Naive thymus-derived CD4-positive, alpha-beta T cell (primary cell): ENCODE measurements at regions of chr17 and their contacts with region 1.

Region 1: GRCh38 chr17:28644985-28645939 is at the start of gene BLTP2:
- DNase-seq: peak; percentile 86 to 95 (median 93)
- ATAC-seq: peak; percentile 99
- H3K4me3 ChIP-seq: peak within 1 kb of the TSS; percentile 87
- H3K4me3 Mint-ChIP-seq: peak within 1 kb of the TSS; percentile 89 to 99 (median 94)
- H3K27ac ChIP-seq: peak within 1 kb of the TSS; percentile 95
- H3K27ac Mint-ChIP-seq: peak within 1 kb of the TSS; percentile 90 to 99 (median 97)
- H3K4me1 ChIP-seq: peaks cover 26 to 29% of the 10 kb centered on the region in 2 donors
- H3K4me1 Mint-ChIP-seq: peaks cover 29 to 57% (median 39%) of the 10 kb centered on the region in 7 donors
- H3K27me3 ChIP-seq: no peaks in the 10 kb centered on the region
- H3K27me3 Mint-ChIP-seq: no peaks in the 10 kb centered on the region
- total RNA-seq, gene BLTP2: 143 to 163 (median 153) TPM

Region 2: DNA sequence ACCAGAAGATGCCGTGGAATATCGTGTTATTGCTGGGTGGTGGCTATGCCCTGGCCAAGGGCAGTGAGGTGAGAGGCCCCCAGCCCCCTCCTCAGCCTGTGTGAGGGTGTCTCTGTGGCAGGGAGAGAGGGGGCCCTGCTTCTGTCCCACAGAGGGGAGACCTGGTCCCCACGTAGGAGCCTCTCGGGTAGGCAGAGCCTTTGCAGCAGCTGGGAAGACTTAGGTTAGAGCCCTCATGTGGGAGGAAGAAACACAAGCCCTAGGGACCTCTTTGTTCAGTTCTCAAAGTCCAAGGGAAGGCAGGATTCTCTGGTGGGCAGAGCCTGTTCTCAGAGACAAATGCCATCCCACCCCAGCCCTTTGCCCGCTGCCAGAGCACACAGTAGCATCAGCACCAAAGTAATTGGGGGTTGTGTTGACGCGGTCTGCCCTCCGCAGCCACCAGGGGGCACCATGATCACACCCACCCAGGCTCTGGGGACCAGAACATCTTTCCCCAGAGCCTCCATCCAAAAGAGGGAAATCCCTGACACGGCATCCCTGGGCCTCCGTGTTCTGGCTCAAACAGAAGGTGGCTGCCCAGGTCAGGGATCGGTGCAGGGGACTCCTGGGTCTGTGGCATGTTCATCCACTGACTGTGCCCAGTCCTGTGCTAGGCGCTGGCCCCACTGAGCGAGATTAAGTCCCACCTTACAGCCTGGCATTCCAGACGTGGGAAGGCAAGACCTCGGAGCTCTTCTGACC is 150.6 kb before region 1 on chr17:
- CTCF ChIA-PET with region 1: no interaction called
- POLR2A ChIA-PET with region 1: no interaction called
- intact Hi-C with region 1: loop called in 1 of 2 experiments (anchors 1 kb)
- DNase-seq: peak; percentile 56 to 85 (median 73)
- ATAC-seq: peak; percentile 90
- H3K4me3 ChIP-seq: no peak overlapping the region
- H3K4me3 Mint-ChIP-seq: no peak overlapping the region
- H3K27ac ChIP-seq: no peak overlapping the region
- H3K27ac Mint-ChIP-seq: no peak overlapping the region
- H3K4me1 ChIP-seq: no peaks in the 10 kb centered on the region
- H3K4me1 Mint-ChIP-seq: peaks cover 0 to 2% (median 0%) of the 10 kb centered on the region in 7 donors
- H3K27me3 ChIP-seq: no peaks in the 10 kb centered on the region
- H3K27me3 Mint-ChIP-seq: no peaks in the 10 kb centered on the region

Region 3: DNA sequence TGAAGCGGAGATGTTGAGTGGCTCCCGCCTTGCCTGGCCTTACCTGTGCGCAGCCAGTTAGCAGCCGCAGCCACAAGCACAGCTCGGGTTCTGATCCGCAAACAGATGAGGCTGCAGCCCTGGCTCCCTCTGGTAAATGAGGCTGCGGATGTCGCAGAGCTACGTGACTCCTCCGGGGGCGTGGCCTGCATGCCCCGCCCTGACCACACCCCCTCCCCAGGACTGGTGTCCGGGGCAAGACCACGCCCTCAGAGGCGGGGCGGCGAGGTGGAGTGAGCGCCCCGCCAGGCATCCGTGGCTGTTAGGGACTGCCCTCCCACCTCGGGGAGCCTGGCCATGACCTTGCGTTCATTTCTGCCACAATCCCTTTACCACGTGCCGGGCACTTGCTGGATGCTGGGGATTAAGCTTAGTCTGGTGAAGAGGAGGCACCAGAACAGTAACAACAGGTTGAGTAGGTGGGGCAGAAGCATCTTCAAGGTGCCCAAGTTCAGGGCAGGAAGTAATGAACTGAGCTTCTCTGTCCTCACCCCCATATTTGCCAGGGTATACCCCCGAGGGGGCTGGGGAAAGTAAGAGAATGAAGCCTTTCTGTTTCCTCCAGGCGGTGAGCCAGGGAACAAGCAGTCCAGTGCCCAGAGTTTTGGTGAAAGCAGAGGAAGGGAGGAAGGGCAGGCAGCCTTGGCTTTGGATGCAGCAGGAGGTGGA is 68.3 kb before region 1 on chr17 and contains the start of gene ALDOC:
- CTCF ChIA-PET with region 1: no interaction called
- POLR2A ChIA-PET with region 1: interaction called, 14 read pairs
- intact Hi-C with region 1: loop called (anchors 1 to 5 kb)
- DNase-seq: peak; percentile 95 to 99 (median 98)
- ATAC-seq: peak; percentile 100
- H3K4me3 ChIP-seq: peak within 1 kb of the TSS; percentile 50
- H3K4me3 Mint-ChIP-seq: peak within 1 kb of the TSS; percentile 83 to 96 (median 86)
- H3K27ac ChIP-seq: peak within 1 kb of the TSS; percentile 52
- H3K27ac Mint-ChIP-seq: peak within 1 kb of the TSS; percentile 79 to 95 (median 89)
- H3K4me1 ChIP-seq: peaks cover 19 to 23% of the 10 kb centered on the region in 2 donors
- H3K4me1 Mint-ChIP-seq: peaks cover 20 to 70% (median 38%) of the 10 kb centered on the region in 7 donors
- H3K27me3 ChIP-seq: no peaks in the 10 kb centered on the region
- H3K27me3 Mint-ChIP-seq: no peaks in the 10 kb centered on the region
- total RNA-seq, gene ALDOC: 24.5 to 159 (median 40.1) TPM

Region 4: DNA sequence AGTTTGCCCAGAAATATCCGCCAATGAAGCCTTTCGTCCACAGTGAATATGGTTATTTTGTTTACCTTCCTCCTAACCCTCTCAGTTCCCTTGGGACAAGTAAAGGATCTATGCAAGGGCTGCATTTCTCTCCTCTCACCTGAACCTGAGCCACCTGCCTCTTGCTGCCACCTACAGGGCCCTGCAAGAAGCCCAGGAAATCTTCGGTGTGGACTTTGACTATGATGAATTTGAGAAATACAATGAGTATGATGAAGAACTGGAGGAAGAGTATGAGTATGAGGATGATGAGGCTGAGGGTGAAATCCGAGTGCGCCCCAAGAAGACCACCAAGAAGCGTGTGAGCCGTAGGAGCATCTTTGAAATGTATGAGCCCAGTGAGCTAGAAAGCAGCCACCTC is 30.7 kb after region 1 on chr17:
- CTCF ChIA-PET with region 1: interaction called, 4 read pairs
- POLR2A ChIA-PET with region 1: interaction called, 6 read pairs
- intact Hi-C with region 1: loop called (anchors 1 kb)
- DNase-seq: no peak
- ATAC-seq: peak; percentile 44
- H3K4me3 ChIP-seq: no peak overlapping the region
- H3K4me3 Mint-ChIP-seq: no peak overlapping the region
- H3K27ac ChIP-seq: no peak overlapping the region
- H3K27ac Mint-ChIP-seq: peak overlapping the region in 2 of 9 donors; percentile 31 to 39
- H3K4me1 ChIP-seq: no peaks in the 10 kb centered on the region
- H3K4me1 Mint-ChIP-seq: peaks cover 0 to 5% (median 0%) of the 10 kb centered on the region in 7 donors
- H3K27me3 ChIP-seq: no peaks in the 10 kb centered on the region
- H3K27me3 Mint-ChIP-seq: no peaks in the 10 kb centered on the region

Region 5: GRCh38 chr17:28734813-28735722 is 89.8 kb after region 1 on chr17:
- CTCF ChIA-PET with region 1: no interaction called
- POLR2A ChIA-PET with region 1: no interaction called
- intact Hi-C with region 1: no loop called
- DNase-seq: no peak
- ATAC-seq: no peak
- H3K4me3 ChIP-seq: no peak overlapping the region
- H3K4me3 Mint-ChIP-seq: no peak overlapping the region
- H3K27ac ChIP-seq: no peak overlapping the region
- H3K27ac Mint-ChIP-seq: no peak overlapping the region
- H3K4me1 ChIP-seq: peaks cover 0 to 5% of the 10 kb centered on the region in 2 donors
- H3K4me1 Mint-ChIP-seq: peaks cover 5 to 19% (median 14%) of the 10 kb centered on the region in 7 donors
- H3K27me3 ChIP-seq: no peaks in the 10 kb centered on the region
- H3K27me3 Mint-ChIP-seq: no peaks in the 10 kb centered on the region

Region 6: DNA sequence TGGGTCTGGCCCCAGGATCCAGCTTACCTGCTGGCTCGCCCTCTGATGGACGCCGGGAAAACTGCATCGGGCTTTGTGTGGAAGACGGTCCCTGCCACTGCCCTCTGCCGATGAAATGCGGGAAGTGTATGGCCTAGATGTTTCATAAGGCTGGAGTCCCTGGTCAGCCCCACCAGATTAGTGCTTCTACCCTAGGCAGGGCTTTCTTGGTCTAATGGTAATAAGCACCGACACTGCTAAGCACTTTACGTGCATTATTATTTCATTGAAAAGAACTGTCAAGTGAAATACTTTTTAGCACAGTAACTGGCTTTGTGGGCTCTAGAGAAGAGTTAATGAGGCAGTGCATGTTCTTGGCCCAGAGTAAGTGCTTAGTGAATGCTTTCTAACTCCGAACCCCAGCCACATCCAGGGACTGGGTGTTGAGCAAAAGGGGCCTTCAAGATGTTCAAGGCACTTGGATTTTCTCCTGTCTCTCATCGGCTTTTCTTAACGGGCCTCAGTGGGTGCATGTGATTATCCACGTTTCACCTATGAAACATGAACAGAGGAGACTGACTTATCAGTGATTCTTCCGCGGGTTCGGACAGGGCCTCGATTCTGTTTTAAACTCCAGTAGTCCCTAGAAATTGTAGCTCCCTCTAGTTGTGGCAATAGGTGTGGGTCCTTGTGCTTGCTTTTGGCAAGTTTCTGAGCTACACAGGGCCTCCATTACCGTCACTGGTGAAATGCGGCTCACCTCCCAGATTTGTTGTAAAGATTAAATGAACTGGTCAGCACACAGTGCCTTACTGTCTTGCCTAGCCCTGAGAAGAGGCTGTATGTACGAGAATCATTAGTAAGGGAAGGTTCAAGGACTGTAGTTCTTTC is 105.2 kb after region 1 on chr17:
- CTCF ChIA-PET with region 1: no interaction called
- POLR2A ChIA-PET with region 1: no interaction called
- intact Hi-C with region 1: loop called in 1 of 2 experiments (anchors 1 kb)
- DNase-seq: peak; percentile 73 to 87 (median 82)
- ATAC-seq: peak; percentile 96
- H3K4me3 ChIP-seq: no peak overlapping the region
- H3K4me3 Mint-ChIP-seq: peak overlapping the region in 1 of 10 donors; percentile 51
- H3K27ac ChIP-seq: peak overlapping the region; percentile 2
- H3K27ac Mint-ChIP-seq: peak overlapping the region in 4 of 9 donors; percentile 11 to 52 (median 38)
- H3K4me1 ChIP-seq: peaks cover 6 to 14% of the 10 kb centered on the region in 2 donors
- H3K4me1 Mint-ChIP-seq: peaks cover 0 to 29% (median 15%) of the 10 kb centered on the region in 7 donors
- H3K27me3 ChIP-seq: no peaks in the 10 kb centered on the region
- H3K27me3 Mint-ChIP-seq: no peaks in the 10 kb centered on the region

Region 7: DNA sequence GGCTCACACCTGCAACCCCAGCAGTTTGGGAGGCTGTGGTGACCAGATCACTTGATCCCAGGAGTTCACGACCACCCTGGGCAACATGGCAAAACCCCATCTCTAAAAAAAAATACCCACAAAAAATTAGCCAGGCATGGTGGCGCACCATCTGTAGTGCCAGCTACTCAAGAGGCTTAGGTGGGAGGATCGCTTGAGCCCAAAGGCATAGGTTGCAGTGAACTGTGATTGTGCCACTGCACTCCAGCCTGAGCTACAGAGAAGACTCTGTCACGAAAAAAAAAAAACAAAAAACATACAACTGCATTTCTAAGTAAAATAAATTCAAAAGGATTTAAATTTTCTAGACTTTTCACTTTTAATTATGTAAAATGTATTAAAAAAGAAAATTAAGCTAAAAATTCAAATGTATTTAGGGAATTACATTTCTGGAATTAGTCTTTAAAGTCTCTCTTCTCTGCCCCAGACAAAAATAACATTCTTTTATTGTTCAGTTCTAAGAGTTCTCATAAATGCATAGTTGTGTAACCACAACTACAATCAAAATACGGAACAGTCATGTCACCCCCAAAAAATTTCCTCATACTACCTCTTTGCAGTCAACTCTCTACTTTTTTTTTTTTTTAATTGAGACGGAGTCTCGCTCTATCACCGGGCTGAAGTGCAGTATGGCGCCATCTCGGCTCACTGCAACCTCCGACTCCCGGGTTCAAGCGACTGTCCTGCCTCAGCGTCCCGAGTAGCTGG is 183.2 kb after region 1 on chr17:
- CTCF ChIA-PET with region 1: no interaction called
- POLR2A ChIA-PET with region 1: no interaction called
- intact Hi-C with region 1: no loop called
- DNase-seq: peak in 1 of 9 donors; percentile 13
- ATAC-seq: no peak
- H3K4me3 ChIP-seq: no peak overlapping the region
- H3K4me3 Mint-ChIP-seq: no peak overlapping the region
- H3K27ac ChIP-seq: no peak overlapping the region
- H3K27ac Mint-ChIP-seq: no peak overlapping the region
- H3K4me1 ChIP-seq: no peaks in the 10 kb centered on the region
- H3K4me1 Mint-ChIP-seq: peaks cover 8 to 23% (median 13%) of the 10 kb centered on the region in 7 donors
- H3K27me3 ChIP-seq: no peaks in the 10 kb centered on the region
- H3K27me3 Mint-ChIP-seq: no peaks in the 10 kb centered on the region

Region 8: DNA sequence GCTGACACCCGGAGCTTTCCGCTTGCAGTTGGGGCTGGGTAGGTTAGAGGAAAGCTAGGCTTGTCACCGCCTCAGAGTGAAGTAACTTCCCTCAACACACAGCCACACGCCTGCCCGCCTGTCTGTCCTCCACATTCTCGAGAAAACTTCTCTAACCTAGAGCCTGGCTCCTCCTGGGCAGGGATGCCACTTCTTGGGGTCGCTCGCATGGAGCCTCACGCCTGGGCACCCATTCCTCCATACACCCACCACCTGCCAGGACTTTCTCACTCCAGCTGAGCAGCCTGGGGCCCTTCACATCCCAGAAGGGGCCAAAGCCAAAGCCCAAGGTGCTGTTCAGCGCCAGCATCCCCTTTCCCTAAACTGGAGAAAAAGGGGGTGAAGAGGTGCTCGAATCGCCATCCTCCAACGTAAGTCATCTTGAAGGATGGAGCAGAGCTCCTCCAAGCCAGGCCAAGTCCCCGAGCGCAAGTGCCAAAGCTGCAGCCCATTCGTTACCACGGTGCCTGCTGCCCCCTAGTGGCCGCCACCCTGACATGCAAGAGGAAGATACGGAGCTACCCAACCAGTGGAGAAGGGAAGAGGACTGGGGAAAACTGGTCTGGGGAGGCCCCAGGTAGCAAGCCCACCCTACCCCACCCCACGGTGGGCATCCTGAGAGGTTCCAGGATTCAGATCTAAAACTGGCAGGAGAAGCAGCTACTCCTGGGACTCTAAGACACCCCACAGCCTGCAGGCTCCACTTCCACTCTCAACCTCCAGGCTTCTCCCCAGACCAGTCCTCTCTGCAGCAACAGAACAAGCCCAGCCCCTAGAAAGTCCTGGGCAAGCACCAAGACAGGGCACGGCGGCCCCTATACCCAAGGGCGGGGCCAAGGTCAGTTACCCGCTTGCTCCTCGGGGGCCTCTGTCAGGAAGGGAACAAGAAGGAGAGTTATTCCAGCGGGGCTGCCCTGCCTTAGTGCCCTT is 471.8 kb after region 1 on chr17:
- CTCF ChIA-PET with region 1: no interaction called
- POLR2A ChIA-PET with region 1: no interaction called
- intact Hi-C with region 1: loop called in 1 of 2 experiments (anchors 1 kb)
- DNase-seq: peak; percentile 49 to 81 (median 69)
- ATAC-seq: peak; percentile 89
- H3K4me3 ChIP-seq: no peak overlapping the region
- H3K4me3 Mint-ChIP-seq: peak overlapping the region in 1 of 10 donors; percentile 44
- H3K27ac ChIP-seq: no peak overlapping the region
- H3K27ac Mint-ChIP-seq: peak overlapping the region in 5 of 9 donors; percentile 54 to 74 (median 61)
- H3K4me1 ChIP-seq: no peaks in the 10 kb centered on the region
- H3K4me1 Mint-ChIP-seq: peaks cover 0 to 11% (median 5%) of the 10 kb centered on the region in 7 donors
- H3K27me3 ChIP-seq: no peaks in the 10 kb centered on the region
- H3K27me3 Mint-ChIP-seq: no peaks in the 10 kb centered on the region